ENCODE measurements at regions of chr16 and their contacts with region 1.

Region 1: GRCh38 chr16:68085259-68086071 is at the start of gene NFATC3:
- DNase-seq: peak; percentile 99
- ATAC-seq: peak; percentile 87 to 93 (median 90)
- H3K4me3 ChIP-seq: peak within 1 kb of the TSS; percentile 70 to 95 (median 88)
- H3K27ac ChIP-seq: peak within 1 kb of the TSS; percentile 96 to 99 (median 98)
- H3K4me1 ChIP-seq: peaks cover 0 to 78% (median 55%) of the 10 kb centered on the region in 12 donors
- H3K27me3 ChIP-seq: no peaks in the 10 kb centered on the region
- CTCF ChIP-seq: peak in 2 of 12 donors; percentile 16 to 29
- POLR2A ChIP-seq: peak in 1 of 2 donors; percentile 83
- total RNA-seq, gene NFATC3: 20.6 to 35.1 (median 28.8) TPM

Region 2: GRCh38 chr16:68049449-68049848 is 36.0 kb before region 1 on chr16:
- intact Hi-C with region 1: no loop called
- DNase-seq: no peak
- ATAC-seq: no peak
- H3K4me3 ChIP-seq: no peak overlapping the region
- H3K27ac ChIP-seq: no peak overlapping the region
- H3K4me1 ChIP-seq: peaks cover 0 to 2% (median 0%) of the 10 kb centered on the region in 12 donors
- H3K27me3 ChIP-seq: no peaks in the 10 kb centered on the region
- CTCF ChIP-seq: no peak
- POLR2A ChIP-seq: no peak

Region 3: DNA sequence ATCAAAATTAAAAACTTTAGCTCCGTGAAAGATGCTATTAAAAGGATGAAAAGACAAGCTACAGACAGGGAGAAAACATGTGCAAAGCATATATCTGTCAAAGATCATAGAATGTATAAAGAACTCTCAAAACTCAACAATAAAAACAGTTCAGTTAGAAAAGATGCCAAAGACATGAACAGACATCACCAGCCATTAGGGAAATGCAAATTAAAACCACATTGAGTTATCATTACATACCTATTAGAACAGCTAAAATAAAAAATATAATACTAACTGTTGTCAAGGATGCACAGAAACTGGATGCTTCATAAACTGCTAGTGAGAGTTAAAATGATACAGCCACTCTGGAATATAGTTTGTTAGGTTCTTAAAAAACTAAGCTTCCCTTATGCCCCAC is 58.5 kb after region 1 on chr16:
- intact Hi-C with region 1: loop called in 1 of 10 experiments (anchors 5 kb)
- DNase-seq: no peak
- ATAC-seq: no peak
- H3K4me3 ChIP-seq: no peak overlapping the region
- H3K27ac ChIP-seq: no peak overlapping the region
- H3K4me1 ChIP-seq: peaks cover 0 to 32% (median 14%) of the 10 kb centered on the region in 12 donors
- H3K27me3 ChIP-seq: no peaks in the 10 kb centered on the region
- CTCF ChIP-seq: no peak
- POLR2A ChIP-seq: no peak

Region 4: DNA sequence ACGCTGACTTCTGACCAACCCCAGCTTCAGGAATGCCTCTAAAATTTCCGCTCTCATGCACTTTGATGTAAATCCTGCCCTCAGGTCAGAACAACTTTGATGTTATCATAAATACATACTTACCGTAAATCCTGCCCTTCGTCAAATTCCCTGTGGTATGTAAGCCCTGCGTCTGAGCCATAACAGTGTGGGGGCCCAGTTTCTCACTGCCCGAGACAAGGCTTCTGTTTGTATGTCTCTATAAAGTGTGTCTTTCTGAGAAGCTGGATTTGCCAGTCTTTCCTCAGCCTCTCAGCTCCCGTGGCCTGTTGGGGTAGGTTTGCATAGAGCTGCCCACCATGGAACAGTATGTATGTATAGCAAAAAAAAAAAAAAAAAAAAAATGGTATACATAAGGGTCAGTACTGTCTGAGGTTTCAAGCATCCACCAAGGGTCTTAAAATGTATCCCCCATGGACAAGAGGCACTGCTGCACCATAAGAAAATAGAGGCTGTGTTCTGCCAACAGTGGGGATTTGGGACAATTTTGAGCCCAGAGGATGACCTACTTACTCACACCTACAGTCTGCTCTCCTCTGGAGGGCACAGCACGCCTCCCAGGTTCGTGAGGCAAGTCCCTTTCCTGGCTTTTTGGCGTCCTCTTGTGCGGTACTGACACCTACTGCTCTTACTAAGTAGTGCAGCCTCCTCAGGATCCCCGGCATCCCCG is 242.8 kb after region 1 on chr16:
- intact Hi-C with region 1: loop called in 3 of 10 experiments (anchors 10 kb)
- DNase-seq: peak; percentile 76 to 84 (median 81)
- ATAC-seq: peak; percentile 85 to 95 (median 94)
- H3K4me3 ChIP-seq: no peak overlapping the region
- H3K27ac ChIP-seq: no peak overlapping the region
- H3K4me1 ChIP-seq: peaks cover 0 to 27% (median 7%) of the 10 kb centered on the region in 12 donors
- H3K27me3 ChIP-seq: no peaks in the 10 kb centered on the region
- CTCF ChIP-seq: peak; percentile 85 to 97 (median 92)
- POLR2A ChIP-seq: no peak

Measured in heart left ventricle (tissue), 16 donors.